ENCODE measurements at regions of chr6 and their contacts with region 1.

Region 1: GRCh38 chr6:106727480-106728149 is 98.2 kb downstream of the QRSL1 start:
- DNase-seq: no peak
- H3K4me3 Mint-ChIP-seq: no peak overlapping the region
- H3K27ac Mint-ChIP-seq: peak overlapping the region; percentile 77
- H3K4me1 Mint-ChIP-seq: peaks cover 25% of the 10 kb centered on the region
- H3K27me3 Mint-ChIP-seq: no peaks in the 10 kb centered on the region
- CTCF ChIP-seq: no peak

Region 2: DNA sequence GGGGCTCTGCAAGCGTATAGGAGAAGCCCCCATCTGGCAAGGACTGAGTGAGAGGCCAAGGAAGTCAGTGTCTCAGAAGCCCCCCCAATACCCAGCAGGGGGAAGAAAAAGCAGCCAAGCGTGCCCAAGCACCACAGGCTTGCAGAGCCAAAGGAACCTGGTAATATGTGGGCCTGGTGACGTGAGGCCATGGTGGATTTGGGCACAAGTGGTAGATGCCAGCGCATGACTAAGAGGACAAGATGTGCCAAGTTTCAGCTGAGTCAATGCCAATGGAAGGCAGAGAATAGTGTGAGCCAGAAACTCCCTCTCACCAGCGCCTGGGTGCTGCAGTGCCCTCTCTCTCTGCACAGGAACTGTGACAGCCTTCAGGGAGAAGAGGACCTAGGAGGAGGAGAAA is 11.8 kb after region 1 on chr6:
- CTCF ChIA-PET with region 1: interaction called, 5 read pairs
- POLR2A ChIA-PET with region 1: interaction called, 22 read pairs
- intact Hi-C with region 1: no loop called
- DNase-seq: peak; percentile 99
- H3K4me3 Mint-ChIP-seq: no peak overlapping the region
- H3K27ac Mint-ChIP-seq: peak overlapping the region; percentile 70
- H3K4me1 Mint-ChIP-seq: peaks cover 47% of the 10 kb centered on the region
- H3K27me3 Mint-ChIP-seq: no peaks in the 10 kb centered on the region
- CTCF ChIP-seq: no peak

Region 3: DNA sequence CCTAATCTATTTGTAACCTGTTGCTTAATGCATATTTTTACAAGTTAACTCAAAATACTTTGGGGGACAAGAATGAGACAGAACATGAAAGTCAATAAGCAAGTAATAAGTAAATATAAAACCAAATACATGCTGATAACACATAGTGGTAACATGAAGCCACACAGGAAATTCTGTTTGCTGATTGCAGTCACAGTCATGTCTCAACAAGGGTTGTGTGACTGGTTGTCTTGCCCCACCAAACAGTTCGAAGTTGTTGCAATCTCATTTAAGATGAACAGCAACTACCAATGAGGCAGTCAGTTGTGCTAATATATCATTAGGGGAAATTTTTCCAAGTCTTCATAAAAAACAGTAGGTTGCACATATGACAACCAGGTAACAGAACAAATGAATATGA is 232.4 kb after region 1 on chr6:
- CTCF ChIA-PET with region 1: no interaction called
- POLR2A ChIA-PET with region 1: no interaction called
- intact Hi-C with region 1: no loop called
- DNase-seq: no peak
- H3K4me3 Mint-ChIP-seq: no peak overlapping the region
- H3K27ac Mint-ChIP-seq: no peak overlapping the region
- H3K4me1 Mint-ChIP-seq: no peaks in the 10 kb centered on the region
- H3K27me3 Mint-ChIP-seq: no peaks in the 10 kb centered on the region
- CTCF ChIP-seq: no peak

Measured in MCF 10A (cell line).